ENCODE measurements at regions of chr6 and their contacts with region 1.

Region 1: DNA sequence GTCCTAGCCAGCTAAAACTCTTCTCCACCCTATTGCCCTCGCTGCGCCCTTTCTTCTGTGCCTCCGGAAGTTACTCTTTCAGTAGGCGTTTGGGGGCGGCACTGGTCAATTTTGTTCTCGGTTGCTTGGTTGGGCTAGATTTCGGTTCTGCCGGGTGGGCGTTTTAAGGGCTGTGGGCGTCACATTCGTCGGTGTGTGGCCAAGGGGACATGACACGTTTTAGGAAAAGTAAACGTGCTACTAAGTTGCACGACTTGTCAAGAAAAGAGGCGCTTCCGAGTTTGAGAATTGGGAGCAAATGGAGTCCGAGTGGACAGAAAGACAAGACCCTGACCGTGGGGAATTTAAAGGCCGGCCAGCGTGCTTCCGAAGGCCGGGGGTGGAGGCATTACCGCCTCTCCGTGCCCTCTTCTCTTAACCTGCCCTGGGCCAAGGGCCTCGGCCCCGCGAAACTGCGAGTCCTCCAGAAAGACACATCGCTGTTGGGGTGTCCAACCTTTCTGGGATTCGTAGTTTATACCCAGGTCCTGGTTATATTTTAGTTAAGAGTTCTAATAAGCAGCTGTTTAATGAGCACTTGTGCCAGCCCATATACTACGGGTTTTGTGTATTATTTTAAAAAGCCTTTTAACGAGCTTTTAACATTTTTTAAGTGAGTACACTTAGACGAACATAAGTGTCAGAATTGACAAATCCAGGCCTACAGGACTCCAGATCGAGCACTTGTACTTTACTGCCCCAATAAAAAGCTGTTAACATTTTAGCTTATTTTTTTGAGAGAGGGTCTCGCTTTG is 661 bp upstream of the BAG6 start:
- DNase-seq: peak; percentile 92
- H3K4me3 Mint-ChIP-seq: peak overlapping the region; percentile 94
- H3K27ac Mint-ChIP-seq: peak overlapping the region; percentile 99
- H3K4me1 Mint-ChIP-seq: peaks cover 54% of the 10 kb centered on the region
- H3K27me3 Mint-ChIP-seq: no peaks in the 10 kb centered on the region

Region 2: DNA sequence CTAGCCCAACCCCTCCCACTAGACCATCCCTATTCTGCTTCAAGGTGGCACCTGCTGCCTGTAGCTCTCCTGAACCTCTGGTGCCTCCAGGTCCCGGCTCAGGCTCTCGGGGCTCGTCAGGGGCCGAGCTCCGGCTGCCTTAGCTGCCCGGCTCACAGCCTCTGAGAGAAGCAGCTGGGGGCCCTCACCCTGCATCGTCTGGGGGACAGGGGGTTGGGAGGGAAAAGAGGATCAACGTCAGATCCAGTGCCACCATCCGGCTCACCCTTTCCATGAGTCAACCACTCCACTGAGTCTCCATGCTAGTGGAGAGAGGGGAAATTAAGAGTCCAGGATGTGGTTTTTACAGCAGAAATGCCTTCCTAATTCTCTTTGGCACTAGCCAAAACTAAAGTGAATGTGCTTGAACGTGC is 13.7 kb before region 1 on chr6:
- CTCF ChIA-PET with region 1: interaction called, 6 read pairs
- POLR2A ChIA-PET with region 1: interaction called, 10 read pairs
- intact Hi-C with region 1: no loop called
- DNase-seq: peak; percentile 62
- H3K4me3 Mint-ChIP-seq: no peak overlapping the region
- H3K27ac Mint-ChIP-seq: peak overlapping the region; percentile 81
- H3K4me1 Mint-ChIP-seq: peaks cover 5% of the 10 kb centered on the region
- H3K27me3 Mint-ChIP-seq: no peaks in the 10 kb centered on the region

Measured in activated CD4-positive, alpha-beta memory T cell treated with anti-CD3 and anti-CD28 coated beads for 36 hours (primary cell).